WTC11 (cell line): ENCODE measurements at regions of chr16 and their contacts with region 1.

Region 1: DNA sequence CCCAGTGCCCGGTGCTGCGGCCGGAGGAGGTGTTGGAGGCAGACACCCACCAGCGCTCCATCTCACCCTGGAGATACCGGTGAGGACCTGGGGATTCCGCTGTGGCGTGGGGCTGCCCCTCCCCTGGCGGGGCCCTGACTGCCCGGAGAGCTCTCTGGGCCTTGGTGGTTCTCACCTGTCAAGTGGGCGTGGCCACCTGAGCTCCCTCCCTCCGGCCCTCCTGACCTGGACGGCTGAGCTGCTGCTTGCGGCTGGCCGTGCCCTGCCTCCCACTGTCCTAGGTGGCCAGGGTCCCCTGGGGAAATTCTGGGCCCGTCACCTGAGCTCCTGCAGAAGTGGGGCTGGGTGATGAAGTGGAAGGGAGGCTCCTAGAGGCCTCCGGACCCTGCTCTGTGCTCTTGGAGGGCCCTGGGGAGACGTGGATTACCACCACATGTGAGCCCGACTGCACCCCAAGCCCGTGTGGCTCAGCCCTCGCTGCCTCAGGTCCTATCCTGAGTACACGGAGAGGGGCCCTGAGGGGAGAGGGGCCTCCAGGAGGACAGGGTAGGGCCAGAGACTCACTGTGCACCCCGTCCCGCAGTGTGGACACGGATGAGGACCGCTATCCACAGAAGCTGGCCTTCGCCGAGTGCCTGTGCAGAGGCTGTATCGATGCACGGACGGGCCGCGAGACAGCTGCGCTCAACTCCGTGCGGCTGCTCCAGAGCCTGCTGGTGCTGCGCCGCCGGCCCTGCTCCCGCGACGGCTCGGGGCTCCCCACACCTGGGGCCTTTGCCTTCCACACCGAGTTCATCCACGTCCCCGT is 1.1 kb downstream of the IL17C start:
- DNase-seq: peak; percentile 89
- ATAC-seq: peak; percentile 61
- H3K4me3 Mint-ChIP-seq: peak overlapping the region; percentile 33; the same call in 1 of the 2 replicates
- H3K27ac Mint-ChIP-seq: no peak overlapping the region
- H3K4me1 Mint-ChIP-seq: peaks cover 38% of the 10 kb centered on the region
- H3K27me3 Mint-ChIP-seq: peaks cover 22% of the 10 kb centered on the region
- CTCF ChIP-seq: no peak

Region 2: GRCh38 chr16:88628512-88628974 is 10.9 kb before region 1 on chr16:
- CTCF ChIA-PET with region 1: interaction called, 10 read pairs
- POLR2A ChIA-PET with region 1: no interaction called
- DNase-seq: peak; percentile 85
- ATAC-seq: peak; percentile 88
- H3K4me3 Mint-ChIP-seq: no peak overlapping the region
- H3K27ac Mint-ChIP-seq: peak overlapping the region; percentile 53; the same call in 1 of the 2 replicates
- H3K4me1 Mint-ChIP-seq: peaks cover 6% of the 10 kb centered on the region
- H3K27me3 Mint-ChIP-seq: no peaks in the 10 kb centered on the region
- CTCF ChIP-seq: peak; percentile 47

Region 3: DNA sequence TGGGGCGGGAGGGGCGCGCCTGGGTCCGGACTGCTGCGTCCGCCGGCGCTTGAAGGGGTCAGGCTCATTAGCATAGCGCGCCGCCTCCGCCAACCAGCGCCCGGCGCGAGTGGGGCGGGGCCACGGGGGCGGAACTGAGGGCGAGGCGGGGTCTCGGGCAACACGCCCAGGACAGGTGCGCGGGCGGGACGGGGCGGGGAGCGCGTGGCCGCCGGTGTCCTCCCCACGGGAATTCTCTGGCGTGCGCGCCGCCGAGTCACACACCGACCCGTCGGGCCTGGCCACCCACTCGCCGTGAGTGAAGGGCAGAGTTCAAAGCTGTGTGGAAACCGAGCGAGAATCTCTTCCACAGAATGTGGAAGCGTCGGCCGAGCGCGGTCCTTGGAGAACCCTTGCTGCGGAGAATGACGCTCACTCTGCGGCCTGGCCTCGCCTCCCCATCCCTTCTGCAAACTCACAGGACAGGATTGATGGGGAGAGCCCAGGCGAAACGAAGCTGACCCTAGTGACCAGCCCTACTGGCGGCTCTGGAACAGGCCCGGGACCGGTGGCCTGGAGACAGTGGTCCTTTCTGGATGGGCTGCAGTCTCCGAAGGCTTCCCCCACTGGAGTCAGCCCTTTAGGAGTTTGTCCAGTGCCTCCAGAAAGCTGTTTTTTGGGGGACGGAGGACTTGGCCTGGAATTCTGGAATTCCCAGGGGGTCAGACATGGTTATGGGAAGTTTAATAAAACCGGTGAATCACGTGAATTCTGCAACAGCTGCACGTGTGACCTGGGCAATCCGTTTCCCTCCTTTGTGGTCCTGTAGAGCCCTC is 47.2 kb after region 1 on chr16 and contains the start of gene SNAI3:
- CTCF ChIA-PET with region 1: interaction called, 26 read pairs
- POLR2A ChIA-PET with region 1: no interaction called
- DNase-seq: peak; percentile 95
- ATAC-seq: peak; percentile 92
- H3K4me3 Mint-ChIP-seq: peak within 1 kb of the TSS; percentile 74
- H3K27ac Mint-ChIP-seq: no peak within 1 kb of the TSS
- H3K4me1 Mint-ChIP-seq: peaks cover 15% of the 10 kb centered on the region
- H3K27me3 Mint-ChIP-seq: peaks cover 28% of the 10 kb centered on the region
- CTCF ChIP-seq: no peak
- total RNA-seq, gene SNAI3: 8.0 to 9.4 TPM (median 9.1 TPM) in 3 replicates